ENCODE measurements at regions of chr20 and their contacts with region 1.

Region 1: GRCh38 chr20:19828232-19828631 is 70.2 kb downstream of the RIN2 start:
- DNase-seq: no peak
- H3K4me3 ChIP-seq: no peak overlapping the region
- H3K4me3 Mint-ChIP-seq: peak overlapping the region; percentile 25
- H3K27ac Mint-ChIP-seq: peak overlapping the region; percentile 60
- H3K4me1 ChIP-seq: peaks cover 20% of the 10 kb centered on the region
- H3K4me1 Mint-ChIP-seq: peaks cover 13% of the 10 kb centered on the region
- H3K27me3 ChIP-seq: no peaks in the 10 kb centered on the region
- H3K27me3 Mint-ChIP-seq: no peaks in the 10 kb centered on the region
- CTCF ChIP-seq: peak in 1 of 2 experiments; percentile 51

Region 2: DNA sequence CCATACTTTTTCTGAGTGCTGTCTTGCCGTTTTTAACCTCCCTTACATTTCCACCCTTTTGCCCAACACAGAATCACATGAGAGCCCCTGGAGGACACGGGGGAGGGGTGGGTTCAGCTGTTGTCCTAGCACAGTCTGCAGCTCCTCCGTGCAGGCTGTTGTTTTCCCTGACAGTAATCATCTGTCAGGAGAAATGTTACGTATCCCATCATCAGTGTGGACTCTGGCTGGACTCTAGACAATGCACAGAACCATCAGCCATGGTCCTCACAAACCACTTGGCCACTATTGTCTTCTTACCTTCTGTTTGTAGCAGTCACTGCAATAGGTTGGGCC is 21.9 kb after region 1 on chr20:
- CTCF ChIA-PET with region 1: no interaction called
- POLR2A ChIA-PET with region 1: no interaction called
- intact Hi-C with region 1: no loop called
- DNase-seq: no peak
- H3K4me3 ChIP-seq: no peak overlapping the region
- H3K4me3 Mint-ChIP-seq: no peak overlapping the region
- H3K27ac Mint-ChIP-seq: no peak overlapping the region
- H3K4me1 ChIP-seq: no peaks in the 10 kb centered on the region
- H3K4me1 Mint-ChIP-seq: peaks cover 5% of the 10 kb centered on the region
- H3K27me3 ChIP-seq: no peaks in the 10 kb centered on the region
- H3K27me3 Mint-ChIP-seq: no peaks in the 10 kb centered on the region
- CTCF ChIP-seq: no peak

Region 3: GRCh38 chr20:19867940-19868371 is 39.7 kb after region 1 on chr20:
- CTCF ChIA-PET with region 1: no interaction called
- POLR2A ChIA-PET with region 1: no interaction called
- intact Hi-C with region 1: no loop called
- DNase-seq: no peak
- H3K4me3 ChIP-seq: no peak overlapping the region
- H3K4me3 Mint-ChIP-seq: no peak overlapping the region
- H3K27ac Mint-ChIP-seq: no peak overlapping the region
- H3K4me1 ChIP-seq: no peaks in the 10 kb centered on the region
- H3K4me1 Mint-ChIP-seq: peaks cover 6% of the 10 kb centered on the region
- H3K27me3 ChIP-seq: no peaks in the 10 kb centered on the region
- H3K27me3 Mint-ChIP-seq: no peaks in the 10 kb centered on the region
- CTCF ChIP-seq: no peak

Region 4: DNA sequence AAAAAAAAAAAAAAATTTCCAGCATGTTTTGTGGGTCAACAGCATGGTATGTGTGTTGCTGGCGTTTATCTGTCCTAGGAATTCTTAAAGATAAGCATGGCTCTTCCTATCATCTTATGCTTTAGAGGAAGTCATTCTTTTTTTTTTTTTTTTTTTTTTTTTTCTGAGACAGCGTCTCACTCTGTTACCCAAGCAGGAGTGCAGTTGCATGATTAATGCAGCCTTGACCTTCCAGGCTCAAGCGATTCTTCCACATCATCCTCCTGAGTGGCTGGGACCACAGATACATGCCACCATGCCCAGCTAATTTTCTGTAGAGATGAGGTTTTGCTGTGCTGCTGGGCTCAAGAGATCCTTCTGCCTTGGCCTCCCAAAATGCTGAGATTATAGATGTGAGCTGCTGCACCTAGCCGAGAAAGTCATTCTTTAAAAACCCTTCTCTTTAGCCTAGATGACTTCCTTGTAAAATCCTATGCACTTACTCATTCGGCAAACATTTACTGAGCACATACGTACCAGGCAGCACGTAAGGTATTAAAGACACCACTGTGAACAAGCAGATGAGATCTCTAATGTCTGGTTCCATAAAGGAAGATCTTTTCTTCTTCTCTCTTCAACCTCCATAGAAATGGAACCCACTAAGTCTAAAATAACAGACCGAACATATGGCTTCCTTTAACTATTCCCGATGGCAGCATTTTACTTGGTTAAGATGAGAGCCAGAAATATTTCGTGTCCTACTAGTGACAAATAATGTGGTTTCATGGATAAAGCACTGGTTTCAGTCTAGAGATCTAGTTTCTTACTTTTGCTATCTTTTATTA is 52.2 kb after region 1 on chr20:
- CTCF ChIA-PET with region 1: interaction called, 4 read pairs
- POLR2A ChIA-PET with region 1: no interaction called
- intact Hi-C with region 1: loop called (anchors 5 kb)
- DNase-seq: peak; percentile 62 to 69
- H3K4me3 ChIP-seq: no peak overlapping the region
- H3K4me3 Mint-ChIP-seq: peak overlapping the region; percentile 62
- H3K27ac Mint-ChIP-seq: peak overlapping the region; percentile 96
- H3K4me1 ChIP-seq: peaks cover 72% of the 10 kb centered on the region
- H3K4me1 Mint-ChIP-seq: peaks cover 64% of the 10 kb centered on the region
- H3K27me3 ChIP-seq: no peaks in the 10 kb centered on the region
- H3K27me3 Mint-ChIP-seq: no peaks in the 10 kb centered on the region
- CTCF ChIP-seq: no peak

Region 5: DNA sequence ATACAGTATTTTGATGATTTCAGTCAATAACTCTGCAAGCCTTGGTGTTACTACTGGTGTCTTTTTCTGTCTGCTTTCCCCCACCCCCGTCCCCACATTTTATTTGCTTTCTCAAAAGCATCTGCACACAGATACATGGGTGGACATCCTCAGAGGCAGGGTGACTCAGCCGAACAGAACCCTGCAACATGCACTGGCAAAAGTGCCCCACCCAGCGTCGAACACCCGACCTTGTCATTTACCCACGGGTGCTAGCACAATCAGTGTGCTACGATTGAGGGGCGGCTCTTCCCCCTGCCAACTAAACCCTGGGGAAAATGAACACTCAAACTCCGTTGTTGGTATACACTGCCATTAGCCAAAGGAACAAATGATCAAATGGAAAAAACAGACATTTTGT is 73.0 kb after region 1 on chr20:
- CTCF ChIA-PET with region 1: no interaction called
- POLR2A ChIA-PET with region 1: no interaction called
- intact Hi-C with region 1: no loop called
- DNase-seq: no peak
- H3K4me3 ChIP-seq: no peak overlapping the region
- H3K4me3 Mint-ChIP-seq: no peak overlapping the region
- H3K27ac Mint-ChIP-seq: no peak overlapping the region
- H3K4me1 ChIP-seq: peaks cover 23% of the 10 kb centered on the region
- H3K4me1 Mint-ChIP-seq: peaks cover 25% of the 10 kb centered on the region
- H3K27me3 ChIP-seq: no peaks in the 10 kb centered on the region
- H3K27me3 Mint-ChIP-seq: no peaks in the 10 kb centered on the region
- CTCF ChIP-seq: no peak